Activated T-helper 1 cell treated with anti-CD3 and anti-CD28 coated beads, Interleukin-12 subunit alpha, Interleukin-12 subunit beta, Interleukin-2, Interleukin-4 antibody, amounts not matched to agents 30 ng/mL and 10 ng/mL and 1 ng/mL, durations not matched to agents 14 hours and 24 hours and 36 hours (primary cell): ENCODE measurements at regions of chr5 and their contacts with region 1.

Region 1: GRCh38 chr5:119274767-119275130 is 81.1 kb upstream of the TNFAIP8 start:
- DNase-seq: no peak
- H3K4me3 Mint-ChIP-seq: peak overlapping the region; percentile 99
- H3K27ac Mint-ChIP-seq: peak overlapping the region; percentile 95
- H3K4me1 Mint-ChIP-seq: peaks cover 98% of the 10 kb centered on the region
- H3K27me3 Mint-ChIP-seq: no peaks in the 10 kb centered on the region

Region 2: GRCh38 chr5:119031905-119032304 is 242.8 kb before region 1 on chr5:
- intact Hi-C with region 1: loop called (anchors 2 kb)
- DNase-seq: no peak
- H3K4me3 Mint-ChIP-seq: peak overlapping the region; percentile 45
- H3K27ac Mint-ChIP-seq: peak overlapping the region; percentile 21
- H3K4me1 Mint-ChIP-seq: peaks cover 35% of the 10 kb centered on the region
- H3K27me3 Mint-ChIP-seq: peaks cover 2% of the 10 kb centered on the region

Region 3: GRCh38 chr5:119287547-119288073 is 12.9 kb after region 1 on chr5:
- intact Hi-C with region 1: loop called (anchors 1 kb)
- DNase-seq: no peak
- H3K4me3 Mint-ChIP-seq: peak overlapping the region; percentile 72
- H3K27ac Mint-ChIP-seq: peak overlapping the region; percentile 93
- H3K4me1 Mint-ChIP-seq: peaks cover 99% of the 10 kb centered on the region
- H3K27me3 Mint-ChIP-seq: no peaks in the 10 kb centered on the region

Region 4: DNA sequence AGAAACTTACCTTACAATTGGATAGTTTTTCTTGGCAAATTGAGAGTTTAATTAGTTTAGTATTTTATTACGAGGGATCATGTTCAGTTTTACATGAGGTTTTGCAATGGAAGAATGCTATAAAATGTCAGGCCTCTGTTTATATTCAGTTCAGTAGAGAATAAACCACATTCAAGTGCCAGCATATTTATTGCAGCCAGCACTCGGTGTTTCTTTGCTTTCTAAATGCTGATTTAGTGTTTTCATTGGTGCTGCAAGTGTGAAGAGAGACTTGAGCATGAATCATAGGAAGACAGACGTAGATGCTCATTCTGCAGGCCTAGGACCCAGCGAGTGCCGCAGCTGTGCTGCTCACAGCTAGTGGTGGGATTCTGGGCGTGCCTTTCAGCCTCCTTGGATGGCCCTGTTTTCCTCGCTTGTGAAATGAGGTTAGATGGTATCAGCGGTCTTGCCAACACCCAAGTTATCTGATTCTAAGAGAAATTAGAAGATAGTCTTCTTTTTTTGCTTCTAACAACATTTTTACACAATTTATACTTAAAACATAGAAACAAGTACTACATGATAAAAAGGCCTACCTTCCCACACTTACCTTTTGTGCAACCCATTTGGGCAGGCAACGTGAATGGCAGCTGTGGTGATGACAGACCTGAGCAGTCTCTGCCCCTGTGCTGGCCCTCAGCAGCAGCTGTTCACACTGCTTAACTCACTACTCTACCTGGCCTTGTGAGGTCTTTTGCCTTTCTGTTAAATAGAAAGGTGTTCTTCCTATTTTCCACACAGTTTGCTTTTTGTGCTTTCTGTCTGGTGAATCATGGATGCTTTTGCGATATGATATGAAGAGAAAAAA is 54.2 kb after region 1 on chr5:
- intact Hi-C with region 1: loop called (anchors 1 kb)
- DNase-seq: peak; percentile 52
- H3K4me3 Mint-ChIP-seq: peak overlapping the region; percentile 52
- H3K27ac Mint-ChIP-seq: peak overlapping the region; percentile 95
- H3K4me1 Mint-ChIP-seq: peaks cover 91% of the 10 kb centered on the region
- H3K27me3 Mint-ChIP-seq: no peaks in the 10 kb centered on the region